AG04449 (cell line): ENCODE measurements at regions of chr14 and their contacts with region 1.

Region 1: DNA sequence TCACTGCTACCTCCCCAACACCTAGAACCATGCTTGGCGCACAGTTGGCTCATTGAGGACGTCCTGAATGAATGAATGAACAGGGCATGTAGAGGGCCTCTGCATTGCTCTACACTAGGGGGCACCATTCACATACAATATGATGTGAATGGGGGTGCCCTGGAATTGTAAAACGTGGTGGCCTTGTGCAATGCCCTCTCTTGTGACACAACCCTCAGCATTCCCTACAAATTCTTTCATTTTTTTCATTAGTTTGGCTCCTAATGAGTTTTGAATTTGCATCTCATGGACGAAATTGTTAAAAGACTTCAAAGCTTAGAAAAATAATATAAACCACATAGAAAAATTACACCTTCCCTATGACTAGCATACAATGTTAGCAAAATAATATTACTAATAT is 2.3 kb upstream of the DIO2 start:
- DNase-seq: no peak
- H3K4me3 ChIP-seq: no peak overlapping the region
- CTCF ChIP-seq: peak; percentile 51

Region 2: GRCh38 chr14:80110721-80111120 is 102.9 kb before region 1 on chr14:
- CTCF ChIA-PET with region 1: no interaction called
- POLR2A ChIA-PET with region 1: no interaction called
- DNase-seq: no peak
- H3K4me3 ChIP-seq: no peak overlapping the region
- CTCF ChIP-seq: no peak

Region 3: DNA sequence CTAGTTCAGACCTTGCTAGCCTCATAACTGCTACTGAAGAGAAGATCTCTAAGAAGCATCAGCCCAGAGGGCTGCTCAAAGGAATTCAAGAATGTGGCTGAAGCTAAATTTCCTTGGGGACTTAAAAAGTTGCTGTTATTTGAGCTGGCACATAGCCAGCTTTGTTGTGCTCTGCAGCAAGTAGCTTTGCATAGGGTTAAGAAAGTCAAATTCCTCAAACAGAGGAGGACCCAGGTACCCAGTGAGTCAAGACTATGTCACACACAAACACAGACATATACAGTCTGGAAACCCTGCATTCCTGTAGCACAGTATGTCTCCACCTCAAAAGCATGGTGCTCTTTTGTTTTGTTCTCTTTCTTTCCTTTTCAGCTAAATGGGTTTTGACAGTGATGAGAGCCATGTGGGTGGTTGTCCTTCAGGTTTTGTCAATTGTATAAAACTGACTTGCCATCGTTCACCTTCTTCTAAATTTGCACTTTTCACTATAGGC is 177.3 kb after region 1 on chr14:
- CTCF ChIA-PET with region 1: no interaction called
- POLR2A ChIA-PET with region 1: no interaction called
- DNase-seq: peak; percentile 16
- H3K4me3 ChIP-seq: no peak overlapping the region
- CTCF ChIP-seq: no peak

Region 4: DNA sequence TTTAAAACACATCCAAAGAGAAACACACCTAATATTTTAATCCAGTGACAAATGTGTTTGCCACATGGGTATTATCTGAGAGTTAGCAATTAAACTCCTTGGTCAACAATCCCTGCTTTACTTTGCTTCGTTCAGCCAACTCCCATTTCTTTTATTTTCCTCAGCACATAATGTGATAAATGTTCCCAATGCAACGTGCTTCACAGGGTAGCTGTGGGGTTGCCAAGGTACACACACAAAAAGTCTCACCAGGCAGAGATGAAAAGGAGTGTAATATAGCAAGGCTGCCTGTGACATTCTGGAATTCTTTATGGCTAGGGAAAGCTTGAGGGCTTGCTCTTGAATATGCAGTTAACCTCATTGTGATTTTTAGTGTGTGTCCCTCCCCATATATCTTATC is 205.7 kb after region 1 on chr14:
- CTCF ChIA-PET with region 1: no interaction called
- POLR2A ChIA-PET with region 1: no interaction called
- DNase-seq: no peak
- H3K4me3 ChIP-seq: no peak overlapping the region
- CTCF ChIP-seq: no peak

Region 5: GRCh38 chr14:80587075-80587724 is 373.6 kb after region 1 on chr14:
- CTCF ChIA-PET with region 1: interaction called, 10 read pairs
- POLR2A ChIA-PET with region 1: no interaction called
- DNase-seq: no peak
- H3K4me3 ChIP-seq: no peak overlapping the region
- CTCF ChIP-seq: peak; percentile 40

Region 6: GRCh38 chr14:80784820-80785219 is 571.2 kb after region 1 on chr14:
- CTCF ChIA-PET with region 1: interaction called, 12 read pairs
- POLR2A ChIA-PET with region 1: no interaction called
- DNase-seq: no peak
- H3K4me3 ChIP-seq: no peak overlapping the region
- CTCF ChIP-seq: peak; percentile 35

Region 7: GRCh38 chr14:80850197-80850814 is 636.7 kb after region 1 on chr14:
- CTCF ChIA-PET with region 1: interaction called, 11 read pairs
- POLR2A ChIA-PET with region 1: no interaction called
- DNase-seq: no peak
- H3K4me3 ChIP-seq: no peak overlapping the region
- CTCF ChIP-seq: peak; percentile 23